Activated T-helper 2 cell treated with anti-CD3 and anti-CD28 coated beads, Interferon-gamma antibody, Interleukin-2, Interleukin-4, amounts not matched to agents 10 μg/mL and 5 μg/mL and 100 μg/mL, durations not matched to agents 14 hours and 24 hours and 36 hours (primary cell): ENCODE measurements at regions of chr13 and their contacts with region 1.

Region 1: DNA sequence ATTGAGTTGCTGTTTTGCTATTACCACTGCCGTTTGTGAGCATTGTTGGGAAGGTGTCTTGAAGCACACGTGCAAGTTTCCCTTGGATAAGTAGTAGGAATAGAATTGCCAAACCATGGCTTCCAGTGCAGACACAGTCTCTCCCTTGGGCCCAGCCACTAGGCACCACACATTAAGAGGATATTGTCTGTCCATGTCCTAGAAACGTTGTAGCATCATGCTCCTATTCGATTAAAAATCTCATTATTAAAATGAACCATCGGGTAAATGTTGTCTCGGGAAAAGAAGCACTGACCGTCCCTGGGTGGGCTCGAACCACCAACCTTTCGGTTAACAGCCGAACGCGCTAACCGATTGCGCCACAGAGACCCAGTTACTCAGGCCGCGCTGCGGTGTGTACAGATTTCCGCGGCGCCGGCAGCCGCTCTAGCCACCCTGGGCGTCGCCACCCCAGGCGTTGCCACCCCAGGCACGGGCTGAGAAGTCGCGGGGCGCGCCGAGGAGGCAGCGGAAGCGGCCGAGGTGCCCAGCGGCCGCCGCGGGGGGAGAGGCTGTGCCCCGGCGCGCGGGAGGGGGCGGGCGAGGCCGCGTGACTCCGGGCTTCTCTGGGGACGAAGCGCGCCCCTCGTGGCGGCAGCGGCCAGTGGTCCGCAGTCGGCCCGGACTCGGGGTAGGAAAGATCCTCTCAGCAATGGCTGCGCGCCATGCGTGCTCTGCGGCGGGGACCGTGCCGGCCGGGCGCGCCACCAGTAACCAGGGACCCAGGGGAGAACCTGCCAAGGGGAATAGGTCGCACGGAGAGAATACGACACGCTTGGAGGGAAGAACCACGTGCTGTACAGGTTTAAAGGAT is 56.2 kb downstream of the USPL1 start:
- DNase-seq: peak; percentile 85
- H3K4me3 Mint-ChIP-seq: peak overlapping the region; percentile 86
- H3K27ac Mint-ChIP-seq: peak overlapping the region; percentile 73
- H3K4me1 Mint-ChIP-seq: peaks cover 18% of the 10 kb centered on the region
- H3K27me3 Mint-ChIP-seq: peaks cover 29% of the 10 kb centered on the region

Region 2: GRCh38 chr13:30629527-30629926 is 44.4 kb before region 1 on chr13:
- intact Hi-C with region 1: no loop called
- DNase-seq: no peak
- H3K4me3 Mint-ChIP-seq: no peak overlapping the region
- H3K27ac Mint-ChIP-seq: no peak overlapping the region
- H3K4me1 Mint-ChIP-seq: peaks cover 31% of the 10 kb centered on the region
- H3K27me3 Mint-ChIP-seq: no peaks in the 10 kb centered on the region

Region 3: GRCh38 chr13:30654430-30654829 is 19.5 kb before region 1 on chr13:
- intact Hi-C with region 1: loop called (anchors 1 kb)
- DNase-seq: peak; percentile 56
- H3K4me3 Mint-ChIP-seq: peak overlapping the region; percentile 59
- H3K27ac Mint-ChIP-seq: peak overlapping the region; percentile 76
- H3K4me1 Mint-ChIP-seq: peaks cover 36% of the 10 kb centered on the region
- H3K27me3 Mint-ChIP-seq: no peaks in the 10 kb centered on the region

Region 4: GRCh38 chr13:30865123-30866049 is 191.5 kb after region 1 on chr13:
- intact Hi-C with region 1: loop called (anchors 10 kb)
- DNase-seq: peak; percentile 35
- H3K4me3 Mint-ChIP-seq: no peak overlapping the region
- H3K27ac Mint-ChIP-seq: peak overlapping the region; percentile 39
- H3K4me1 Mint-ChIP-seq: peaks cover 8% of the 10 kb centered on the region
- H3K27me3 Mint-ChIP-seq: peaks cover 24% of the 10 kb centered on the region